Activated CD4-positive, alpha-beta memory T cell treated with anti-CD3 and anti-CD28 coated beads, Interleukin-2, amount 10 ng/mL, durations not matched to agents 7 days and 5 days (primary cell): ENCODE measurements at regions of chr10 and their contacts with region 1.

Region 1: DNA sequence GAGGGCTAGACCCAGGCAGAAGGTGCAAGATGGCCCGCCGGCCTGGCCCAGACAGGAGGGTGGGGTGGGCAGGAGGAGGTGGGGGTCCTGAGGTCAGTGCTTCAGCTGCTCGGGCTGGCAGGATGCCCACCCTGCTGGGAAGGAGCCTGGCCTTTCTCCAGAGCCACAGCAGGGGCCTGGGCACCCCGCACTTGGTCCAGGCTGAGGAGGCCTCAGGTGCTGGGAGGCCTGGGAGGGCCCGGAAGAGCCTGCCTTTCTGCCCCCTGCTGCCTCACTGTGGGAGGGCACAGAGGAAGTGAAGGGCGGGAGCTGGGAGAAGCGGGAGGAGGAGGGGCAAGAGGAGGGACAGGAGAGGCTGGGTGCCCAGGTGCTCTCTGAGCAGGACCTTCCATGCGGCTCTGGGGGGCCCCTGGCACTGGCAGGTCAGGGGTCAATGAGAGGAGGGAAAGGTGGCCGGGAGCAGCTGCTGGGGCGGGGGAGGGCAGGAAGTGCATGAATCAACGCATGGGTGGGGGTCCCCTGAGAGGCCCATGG is 49.7 kb downstream of the PWWP2B start:
- DNase-seq: peak; percentile 83
- H3K4me3 Mint-ChIP-seq: peak overlapping the region; percentile 68
- H3K27ac Mint-ChIP-seq: peak overlapping the region; percentile 96
- H3K4me1 Mint-ChIP-seq: peaks cover 45% of the 10 kb centered on the region
- H3K27me3 Mint-ChIP-seq: no peaks in the 10 kb centered on the region

Region 2: GRCh38 chr10:132396495-132397035 is 50.2 kb before region 1 on chr10:
- CTCF ChIA-PET with region 1: no interaction called
- POLR2A ChIA-PET with region 1: interaction called, 22 read pairs
- DNase-seq: peak; percentile 72
- H3K4me3 Mint-ChIP-seq: no peak overlapping the region
- H3K27ac Mint-ChIP-seq: no peak overlapping the region
- H3K4me1 Mint-ChIP-seq: peaks cover 9% of the 10 kb centered on the region
- H3K27me3 Mint-ChIP-seq: peaks cover 6% of the 10 kb centered on the region

Region 3: GRCh38 chr10:132434405-132435005 is 12.2 kb before region 1 on chr10:
- CTCF ChIA-PET with region 1: interaction called, 7 read pairs
- POLR2A ChIA-PET with region 1: interaction called, 12 read pairs
- DNase-seq: peak; percentile 66
- H3K4me3 Mint-ChIP-seq: no peak overlapping the region
- H3K27ac Mint-ChIP-seq: peak overlapping the region; percentile 31
- H3K4me1 Mint-ChIP-seq: peaks cover 4% of the 10 kb centered on the region
- H3K27me3 Mint-ChIP-seq: no peaks in the 10 kb centered on the region

Region 4: GRCh38 chr10:132467464-132468149 is 20.9 kb after region 1 on chr10:
- CTCF ChIA-PET with region 1: no interaction called
- POLR2A ChIA-PET with region 1: no interaction called
- DNase-seq: no peak
- H3K4me3 Mint-ChIP-seq: no peak overlapping the region
- H3K27ac Mint-ChIP-seq: no peak overlapping the region
- H3K4me1 Mint-ChIP-seq: no peaks in the 10 kb centered on the region
- H3K27me3 Mint-ChIP-seq: peaks cover 6% of the 10 kb centered on the region

Region 5: GRCh38 chr10:132654702-132655661 is 208.3 kb after region 1 on chr10:
- CTCF ChIA-PET with region 1: no interaction called
- POLR2A ChIA-PET with region 1: no interaction called
- DNase-seq: peak; percentile 49
- H3K4me3 Mint-ChIP-seq: no peak overlapping the region
- H3K27ac Mint-ChIP-seq: no peak overlapping the region
- H3K4me1 Mint-ChIP-seq: no peaks in the 10 kb centered on the region
- H3K27me3 Mint-ChIP-seq: no peaks in the 10 kb centered on the region